IMR-90 (cell line): ENCODE measurements at regions of chr2 and their contacts with region 1.

Region 1: DNA sequence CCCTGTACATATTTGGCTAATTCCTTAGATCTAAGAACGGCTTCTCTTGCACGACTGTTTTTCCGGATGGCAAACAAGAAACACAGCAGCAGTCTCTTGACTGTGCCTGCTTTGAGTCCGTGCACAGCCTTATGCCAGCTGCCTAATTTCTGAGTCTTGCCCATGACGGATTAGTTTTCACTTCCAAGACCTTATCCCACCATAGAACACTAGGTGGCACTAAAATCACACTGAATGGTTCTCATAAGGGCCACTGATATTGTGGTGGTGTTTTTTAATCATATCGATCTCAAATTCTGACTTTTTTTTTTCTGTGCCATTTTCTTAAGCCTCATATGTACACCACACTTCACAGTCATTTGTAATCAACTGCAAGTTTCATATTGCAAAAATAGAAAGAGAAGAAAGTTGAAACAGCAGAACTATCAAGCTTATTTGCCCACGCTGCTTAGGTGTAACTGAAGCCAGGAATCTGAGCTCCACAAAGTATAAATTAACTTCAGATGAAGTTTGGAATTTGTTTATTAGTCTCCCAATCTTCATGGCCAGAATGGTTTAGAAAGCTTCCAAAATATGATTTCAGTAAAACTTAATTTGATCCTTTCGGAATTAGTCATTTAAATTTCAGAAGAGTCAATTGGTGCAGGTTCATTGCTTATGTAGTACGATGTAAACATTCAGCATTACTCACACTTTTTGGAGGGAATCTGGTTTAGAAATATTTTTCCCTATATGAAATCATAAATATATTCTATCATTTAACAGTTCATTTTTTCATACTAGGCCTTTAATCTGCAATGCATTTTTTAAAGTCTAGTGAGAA is 45.5 kb upstream of the SCN7A start:
- DNase-seq: peak; percentile 84
- ATAC-seq: peak; percentile 97
- H3K4me3 ChIP-seq: 0 out of 2 replicates have a peak overlapping the region, but pooled peaks have one; percentile 4
- H3K27ac ChIP-seq: peak overlapping the region; percentile 37; the same call in 1 of the 2 replicates
- H3K4me1 ChIP-seq: no peaks in the 10 kb centered on the region
- H3K27me3 ChIP-seq: no peaks in the 10 kb centered on the region
- CTCF ChIP-seq: peak; percentile 90
- POLR2A ChIP-seq: peak; percentile 47; the same call in 1 of the 2 replicates
- RAD21 ChIP-seq: peak; percentile 96

Region 2: GRCh38 chr2:166485558-166486178 is 53.9 kb before region 1 on chr2:
- CTCF ChIA-PET with region 1: no interaction called
- POLR2A ChIA-PET with region 1: no interaction called
- dilution Hi-C with region 1: no loop called
- in situ Hi-C with region 1: no loop called
- intact Hi-C with region 1: no loop called
- DNase-seq: no peak
- ATAC-seq: no peak
- H3K4me3 ChIP-seq: no peak overlapping the region
- H3K27ac ChIP-seq: no peak overlapping the region
- H3K4me1 ChIP-seq: no peaks in the 10 kb centered on the region
- H3K27me3 ChIP-seq: no peaks in the 10 kb centered on the region; the same call in 1 of the 2 replicates
- CTCF ChIP-seq: no peak
- POLR2A ChIP-seq: no peak
- RAD21 ChIP-seq: no peak

Region 3: GRCh38 chr2:166700079-166700478 is 160.5 kb after region 1 on chr2:
- CTCF ChIA-PET with region 1: no interaction called
- POLR2A ChIA-PET with region 1: no interaction called
- dilution Hi-C with region 1: no loop called
- in situ Hi-C with region 1: no loop called
- intact Hi-C with region 1: loop called (anchors 2 kb)
- DNase-seq: peak; percentile 52
- ATAC-seq: peak; percentile 62; the same call in 1 of the 2 replicates
- H3K4me3 ChIP-seq: no peak overlapping the region
- H3K27ac ChIP-seq: no peak overlapping the region
- H3K4me1 ChIP-seq: no peaks in the 10 kb centered on the region
- H3K27me3 ChIP-seq: no peaks in the 10 kb centered on the region
- CTCF ChIP-seq: peak; percentile 75
- POLR2A ChIP-seq: no peak
- RAD21 ChIP-seq: peak; percentile 82

Region 4: GRCh38 chr2:167028505-167028904 is 489.0 kb after region 1 on chr2:
- CTCF ChIA-PET with region 1: no interaction called
- POLR2A ChIA-PET with region 1: no interaction called
- dilution Hi-C with region 1: no loop called
- in situ Hi-C with region 1: no loop called
- intact Hi-C with region 1: no loop called
- DNase-seq: no peak
- ATAC-seq: no peak
- H3K4me3 ChIP-seq: no peak overlapping the region
- H3K27ac ChIP-seq: no peak overlapping the region
- H3K4me1 ChIP-seq: no peaks in the 10 kb centered on the region
- H3K27me3 ChIP-seq: no peaks in the 10 kb centered on the region
- CTCF ChIP-seq: no peak
- POLR2A ChIP-seq: no peak
- RAD21 ChIP-seq: no peak

Region 5: DNA sequence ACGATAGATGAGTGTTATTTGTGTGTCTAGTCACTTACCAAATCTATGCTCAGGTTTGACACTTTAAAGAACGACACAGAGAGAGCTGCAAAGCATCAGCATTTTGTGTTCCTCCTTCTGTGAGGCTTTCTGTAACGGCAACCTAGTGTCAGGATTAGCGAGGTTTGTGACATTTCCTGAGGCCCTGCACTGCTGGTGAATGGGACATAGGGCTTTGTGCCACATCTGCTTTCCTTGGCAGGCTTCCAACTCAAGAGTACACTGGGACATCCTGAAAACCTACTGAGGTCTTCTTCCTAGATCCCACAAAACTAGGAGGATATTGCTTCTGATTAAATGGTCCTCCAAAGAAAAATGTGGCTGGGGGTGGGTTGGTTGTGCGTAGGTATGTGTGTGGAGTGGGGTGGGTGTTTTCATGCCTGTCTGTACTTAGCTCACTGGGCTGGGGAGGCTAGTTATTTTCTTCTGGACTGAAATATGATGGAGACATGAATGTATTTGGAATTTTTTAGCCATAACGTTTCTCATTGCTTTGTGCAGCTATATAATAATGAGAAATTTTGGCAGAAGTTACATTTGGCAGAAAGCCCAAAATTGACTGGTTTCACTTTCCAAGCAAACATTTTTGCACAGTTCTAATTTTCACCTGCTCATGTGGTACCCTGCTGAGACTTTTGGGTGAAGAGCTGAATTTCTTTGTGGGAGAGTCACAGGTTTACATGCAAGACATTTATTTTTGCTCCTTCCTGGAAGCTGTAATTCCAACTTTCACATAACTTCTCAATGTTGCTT is 657.1 kb after region 1 on chr2:
- CTCF ChIA-PET with region 1: no interaction called
- POLR2A ChIA-PET with region 1: no interaction called
- dilution Hi-C with region 1: no loop called
- in situ Hi-C with region 1: loop called (anchors 10 kb)
- intact Hi-C with region 1: no loop called
- DNase-seq: peak; percentile 59
- ATAC-seq: no peak; the same call in 1 of the 2 replicates
- H3K4me3 ChIP-seq: no peak overlapping the region
- H3K27ac ChIP-seq: no peak overlapping the region
- H3K4me1 ChIP-seq: peaks cover 3% of the 10 kb centered on the region; the same call in 1 of the 2 replicates
- H3K27me3 ChIP-seq: no peaks in the 10 kb centered on the region
- CTCF ChIP-seq: no peak
- POLR2A ChIP-seq: no peak
- RAD21 ChIP-seq: no peak

Region 6: GRCh38 chr2:167292430-167293171 is 753.0 kb after region 1 on chr2:
- CTCF ChIA-PET with region 1: no interaction called
- POLR2A ChIA-PET with region 1: no interaction called
- dilution Hi-C with region 1: no loop called
- in situ Hi-C with region 1: no loop called
- intact Hi-C with region 1: loop called (anchors 2 kb)
- DNase-seq: peak; percentile 93
- ATAC-seq: peak; percentile 98
- H3K4me3 ChIP-seq: peak within 1 kb of the TSS; percentile 68
- H3K27ac ChIP-seq: peak within 1 kb of the TSS; percentile 67
- H3K4me1 ChIP-seq: no peaks in the 10 kb centered on the region; the same call in 1 of the 2 replicates
- H3K27me3 ChIP-seq: no peaks in the 10 kb centered on the region
- CTCF ChIP-seq: peak; percentile 34
- POLR2A ChIP-seq: no peak
- RAD21 ChIP-seq: no peak; the same call in 1 of the 2 replicates

Region 7: DNA sequence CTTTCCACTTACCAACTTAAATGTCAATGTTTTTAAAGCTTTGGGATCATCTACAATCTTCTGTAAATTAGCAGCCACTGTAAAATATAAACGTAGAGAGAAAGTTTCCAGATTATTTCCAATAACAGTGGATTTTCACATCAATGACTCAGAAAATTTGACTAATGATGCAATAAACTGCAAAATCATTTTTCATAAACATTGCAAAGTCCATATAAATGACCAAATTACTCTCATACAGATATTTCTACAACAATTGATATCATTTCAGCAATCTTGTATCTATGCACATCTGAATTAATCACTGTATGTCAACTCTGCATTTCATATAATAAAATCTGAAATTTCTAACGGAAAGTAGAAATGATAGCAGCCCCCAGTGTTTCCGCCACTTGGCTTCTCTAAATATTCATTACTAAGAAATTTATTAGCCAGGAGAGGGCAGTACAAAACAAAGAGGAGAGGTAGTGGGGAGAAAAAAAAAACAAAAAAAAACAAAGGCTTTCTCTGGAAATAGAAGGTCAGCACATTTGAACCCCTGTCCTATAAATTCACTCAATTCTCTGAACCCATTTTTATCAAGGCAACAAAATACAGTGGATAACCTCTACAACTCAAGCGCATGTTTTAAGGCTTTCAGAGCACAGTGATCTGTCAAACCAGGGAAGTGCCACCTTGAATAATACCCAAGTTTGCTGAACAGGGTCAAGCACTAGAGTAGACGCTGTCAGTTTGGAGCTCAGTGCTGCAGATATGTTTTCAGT is 1425.3 kb after region 1 on chr2:
- CTCF ChIA-PET with region 1: no interaction called
- POLR2A ChIA-PET with region 1: no interaction called
- dilution Hi-C with region 1: no loop called
- in situ Hi-C with region 1: no loop called
- intact Hi-C with region 1: loop called (anchors 10 kb)
- DNase-seq: peak; percentile 18
- ATAC-seq: no peak
- H3K4me3 ChIP-seq: no peak overlapping the region
- H3K27ac ChIP-seq: peak overlapping the region; percentile 17; the same call in 1 of the 2 replicates
- H3K4me1 ChIP-seq: peaks cover 16% of the 10 kb centered on the region
- H3K27me3 ChIP-seq: no peaks in the 10 kb centered on the region
- CTCF ChIP-seq: peak; percentile 56
- POLR2A ChIP-seq: no peak
- RAD21 ChIP-seq: peak; percentile 47